Right ventricle myocardium inferior (tissue), 1 donor: ENCODE measurements at regions of chr14 and their contacts with region 1.

Region 1: DNA sequence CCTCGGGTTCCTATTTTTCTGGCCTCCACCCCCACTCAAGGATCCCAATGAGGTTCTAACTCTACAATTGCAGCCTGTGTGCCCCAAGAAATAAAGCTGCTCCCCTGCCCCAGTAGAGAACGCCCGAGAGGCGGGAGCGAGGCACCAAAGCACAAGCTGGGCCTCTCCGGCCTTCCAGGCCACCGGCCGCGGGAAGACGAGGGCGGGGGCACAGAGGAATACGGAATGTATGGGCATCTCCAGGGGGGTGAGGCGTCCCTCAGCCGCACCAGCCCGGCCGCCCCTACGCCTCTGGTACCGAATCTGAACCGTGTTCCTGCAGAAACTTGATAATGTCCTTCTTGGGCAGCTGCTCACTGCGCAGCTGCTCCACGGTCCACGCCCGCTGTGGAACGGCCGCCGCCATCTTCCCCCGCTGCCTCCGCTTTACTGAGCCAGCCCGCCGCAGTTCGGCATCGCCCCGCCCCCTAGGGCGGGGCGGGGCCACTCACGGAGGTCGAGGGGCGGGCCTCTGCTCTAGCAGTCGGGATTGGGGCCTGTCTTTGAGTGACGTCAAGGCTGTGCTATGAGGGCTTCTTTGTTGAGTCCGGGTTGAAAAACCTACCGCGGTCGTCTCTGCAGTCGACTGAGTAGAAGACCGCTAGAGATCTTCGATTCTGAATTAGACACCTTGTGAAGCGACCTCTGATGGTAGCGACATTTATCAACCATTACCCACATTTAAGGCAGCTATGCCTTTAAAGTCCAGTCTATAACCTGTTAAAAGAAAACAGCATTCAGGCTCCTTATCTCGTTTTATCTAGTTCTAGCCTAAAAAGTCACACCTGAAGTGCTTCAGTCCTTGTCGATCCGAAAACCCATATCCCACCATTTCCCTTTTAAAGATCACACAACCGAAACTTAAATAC is at the start of gene FKBP3:
- DNase-seq: peak; percentile 98
- ATAC-seq: peak; percentile 99
- total RNA-seq, gene FKBP3: 121 TPM

Region 2: DNA sequence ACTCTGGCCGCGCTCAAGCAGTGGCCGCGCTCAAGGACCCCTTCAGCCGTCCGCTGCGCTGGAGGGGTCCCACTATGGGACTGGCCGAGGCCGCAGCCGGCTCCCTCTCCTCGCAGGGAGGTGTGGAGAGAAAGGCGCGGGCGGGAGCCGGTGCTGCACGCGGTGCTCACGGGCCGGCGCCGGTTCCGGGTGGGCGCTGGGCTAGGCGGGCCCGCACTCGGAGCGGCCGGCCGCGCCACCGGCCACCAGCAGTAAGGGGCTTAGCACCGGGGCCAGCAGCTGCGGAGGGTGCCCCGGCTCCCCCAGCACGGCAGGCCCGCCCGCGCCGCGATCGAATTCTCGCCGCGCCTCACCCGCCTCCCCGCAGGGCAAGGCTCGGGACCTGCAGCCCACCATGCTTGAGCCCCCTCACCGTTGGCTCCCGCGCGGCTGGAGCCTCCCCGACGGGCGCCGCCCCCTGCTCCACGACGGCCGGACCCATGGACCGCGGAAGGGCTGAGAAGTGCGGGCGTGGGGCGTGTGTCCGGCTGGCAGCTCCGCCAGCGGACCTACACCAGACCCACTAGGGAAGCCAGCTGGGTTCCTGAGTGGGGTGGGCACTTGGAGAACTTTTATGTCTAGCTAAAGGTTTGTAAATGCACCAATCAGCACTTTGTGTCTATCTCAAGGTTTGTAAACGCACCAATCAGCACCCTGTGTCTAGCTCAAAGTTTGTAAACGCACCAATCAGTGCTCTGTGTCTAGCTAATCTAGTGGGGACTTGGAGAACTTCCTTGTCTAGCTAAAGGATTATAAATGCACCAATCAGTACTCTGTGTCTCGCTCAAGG is 222.1 kb before region 1 on chr14:
- intact Hi-C with region 1: loop called (anchors 2 kb)
- DNase-seq: no peak
- ATAC-seq: peak; percentile 59

Region 3: DNA sequence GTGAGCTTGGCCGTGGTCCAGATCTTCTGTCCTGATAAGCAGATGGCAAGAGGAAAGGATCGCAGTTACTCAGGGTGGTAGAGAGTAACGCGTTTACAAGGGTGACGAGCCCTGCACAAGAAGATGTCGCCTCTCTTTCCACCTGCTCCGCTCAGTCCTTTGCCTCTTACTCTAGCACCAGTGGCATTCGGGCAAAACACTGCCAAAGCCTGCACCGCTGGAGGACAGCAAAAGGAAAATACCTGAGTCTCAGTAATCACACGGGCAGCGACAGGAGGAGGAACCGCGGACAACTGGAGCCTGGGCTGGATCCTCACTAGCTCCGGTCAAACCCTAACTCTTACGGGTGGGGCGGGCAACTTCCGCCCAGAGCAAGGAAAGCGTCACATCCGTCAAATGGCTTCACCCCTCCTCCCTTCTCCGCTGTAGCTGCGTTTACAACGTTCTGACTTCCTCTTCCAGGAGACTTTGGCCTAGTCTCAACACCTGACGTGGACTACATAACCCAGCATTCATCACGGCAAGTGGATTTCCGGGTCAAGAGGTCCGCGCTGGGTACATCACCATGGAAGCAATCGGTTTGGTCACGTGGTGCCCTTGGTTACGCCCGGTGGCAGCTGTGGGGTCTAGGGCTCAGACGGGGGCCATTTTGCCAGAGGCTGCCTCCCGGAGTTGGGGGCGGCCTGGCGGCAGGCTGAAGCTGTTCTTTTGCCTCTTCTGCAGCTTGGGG is 172.5 kb before region 1 on chr14 and contains the starts of genes KLHL28 and TOGARAM1:
- intact Hi-C with region 1: loop called (anchors 1 kb)
- DNase-seq: peak; percentile 97
- ATAC-seq: peak; percentile 98
- total RNA-seq, gene KLHL28: 13.0 TPM
- total RNA-seq, gene TOGARAM1: 20.5 TPM

Region 4: GRCh38 chr14:45083971-45084722 is 50.2 kb before region 1 on chr14 and contains the start of gene PRPF39:
- intact Hi-C with region 1: loop called (anchors 2 kb)
- DNase-seq: peak; percentile 97
- ATAC-seq: peak; percentile 100
- total RNA-seq, gene PRPF39: 10.5 TPM

Region 5: DNA sequence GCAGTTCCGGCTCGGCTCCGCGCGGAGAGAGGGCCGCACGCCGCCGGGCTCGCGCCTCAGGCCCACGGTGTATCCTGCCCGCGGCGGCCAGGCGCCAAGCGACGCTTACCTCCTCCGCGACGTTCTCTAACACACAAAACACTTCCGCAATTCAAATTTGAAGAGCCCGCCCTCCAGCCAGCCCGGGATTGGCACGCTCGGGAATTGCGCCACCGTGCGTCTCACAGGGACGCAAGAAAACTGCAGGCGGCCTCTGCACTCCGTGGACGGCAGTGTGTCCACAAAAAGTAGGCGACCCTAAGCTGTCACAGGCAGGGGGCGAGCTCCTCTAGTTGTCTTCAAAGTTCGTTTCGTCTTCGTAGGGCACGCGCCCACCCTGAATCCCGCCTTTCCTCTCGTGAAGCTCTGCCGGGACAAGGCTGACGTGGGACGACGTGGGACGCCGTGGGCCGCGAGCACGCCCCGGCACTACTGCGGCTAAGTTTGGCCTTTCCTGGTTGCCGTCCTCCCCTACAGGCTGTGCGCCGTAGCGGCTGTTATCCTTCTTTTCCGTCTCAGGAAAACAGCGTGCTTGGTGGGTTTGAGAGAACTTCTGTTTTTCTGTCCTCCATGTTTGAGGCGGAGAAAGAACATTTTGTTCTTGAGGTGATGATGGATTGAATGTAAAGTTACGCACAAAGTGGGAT is 118.9 kb after region 1 on chr14 and contains the start of gene MIS18BP1:
- intact Hi-C with region 1: loop called (anchors 1 kb)
- DNase-seq: peak; percentile 98
- ATAC-seq: peak; percentile 97
- total RNA-seq, gene MIS18BP1: 7.6 TPM

Region 6: GRCh38 chr14:45267071-45267470 is 132.8 kb after region 1 on chr14:
- intact Hi-C with region 1: loop called (anchors 5 kb)
- DNase-seq: no peak
- ATAC-seq: peak; percentile 89